ENCODE measurements at regions of chr4 and their contacts with region 1.

Region 1: DNA sequence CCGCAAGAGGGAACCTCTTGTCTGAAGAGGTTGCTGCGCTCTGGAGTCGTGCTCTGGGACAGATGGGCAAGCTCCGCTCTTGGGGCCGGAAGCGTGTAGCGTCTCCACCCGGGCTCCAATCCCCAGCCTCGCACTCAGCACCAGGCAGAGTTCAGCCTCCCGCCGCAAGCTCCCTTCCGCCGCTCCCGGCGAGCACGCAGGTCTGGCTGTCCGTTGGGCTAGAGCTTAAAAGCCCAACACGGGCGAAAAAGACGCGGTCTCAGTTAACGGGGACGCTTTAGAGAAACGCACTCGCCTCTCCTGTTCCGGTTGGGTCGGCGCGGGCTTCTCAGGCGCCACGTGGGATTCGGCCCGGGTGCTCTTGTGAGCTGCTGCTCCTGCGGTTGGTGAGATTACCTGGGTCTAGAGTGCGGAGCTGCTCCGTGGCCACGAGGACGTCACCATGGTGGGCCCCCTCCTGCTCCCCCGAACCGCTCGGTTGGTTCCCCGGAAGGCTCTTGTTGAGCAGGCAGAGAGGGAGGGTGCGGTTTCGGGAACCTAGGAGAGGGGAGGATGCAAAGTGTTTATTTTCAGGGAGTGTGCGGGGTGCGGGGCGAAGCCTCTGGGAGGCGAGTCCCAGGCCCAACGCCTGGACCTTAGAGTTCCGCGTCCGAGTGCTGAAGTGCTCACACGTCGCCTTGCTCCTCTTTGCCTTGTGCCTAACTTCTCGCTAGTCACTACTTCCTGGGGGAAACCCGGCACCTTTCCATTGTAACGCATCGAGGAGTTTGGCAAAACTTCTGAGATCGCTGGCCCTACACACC is at the start of gene TMA16:
- DNase-seq: peak; percentile 79 to 84
- ATAC-seq: peak; percentile 92 to 99 (median 98)
- H3K4me3 ChIP-seq: peak within 1 kb of the TSS; percentile 64 to 96 (median 86)
- H3K27ac ChIP-seq: peak within 1 kb of the TSS; percentile 1 to 91 (median 84)
- H3K4me1 ChIP-seq: peaks cover 0 to 32% (median 12%) of the 10 kb centered on the region in 9 donors
- H3K27me3 ChIP-seq: no peaks in the 10 kb centered on the region
- CTCF ChIP-seq: no peak
- total RNA-seq, gene TMA16: 7.8 to 15.3 (median 9.7) TPM

Region 2: DNA sequence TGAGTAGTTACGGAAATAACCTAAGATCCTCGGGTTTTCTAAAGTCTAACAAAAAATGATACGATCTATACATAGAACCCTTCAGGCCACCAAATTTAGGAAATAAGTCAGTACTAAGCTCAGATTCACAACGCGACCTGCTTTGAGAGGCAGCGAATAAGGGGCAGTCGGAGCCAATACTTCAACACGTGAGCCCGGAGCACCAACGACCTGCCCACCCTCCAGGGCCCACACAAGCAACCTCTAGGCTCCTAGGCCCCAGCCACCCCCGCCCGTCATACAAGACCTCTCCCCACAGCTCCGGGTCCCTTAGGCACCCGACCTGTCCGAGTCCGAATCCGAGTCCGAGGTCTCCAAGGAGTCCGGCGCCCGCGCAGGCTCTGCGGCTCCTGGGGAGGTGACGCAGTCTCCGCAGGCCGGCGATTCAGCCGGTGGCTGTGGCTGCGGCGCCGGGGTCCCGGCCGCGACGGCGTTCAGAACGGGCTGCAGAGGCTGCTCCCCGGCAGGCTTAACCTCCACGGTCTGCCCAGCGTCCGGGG is 328.5 kb before region 1 on chr4:
- intact Hi-C with region 1: loop called in 1 of 10 experiments (anchors 5 kb)
- DNase-seq: peak; percentile 26 to 48
- ATAC-seq: peak; percentile 62 to 90 (median 74)
- H3K4me3 ChIP-seq: peak overlapping the region; percentile 77 to 93 (median 89)
- H3K27ac ChIP-seq: peak overlapping the region; percentile 33 to 92 (median 89)
- H3K4me1 ChIP-seq: peaks cover 2 to 28% (median 24%) of the 10 kb centered on the region in 9 donors
- H3K27me3 ChIP-seq: no peaks in the 10 kb centered on the region
- CTCF ChIP-seq: no peak